Activated CD8-positive, alpha-beta T cell treated with anti-CD3 and anti-CD28 coated beads for 36 hours (primary cell): ENCODE measurements at regions of chr5 and their contacts with region 1.

Region 1: DNA sequence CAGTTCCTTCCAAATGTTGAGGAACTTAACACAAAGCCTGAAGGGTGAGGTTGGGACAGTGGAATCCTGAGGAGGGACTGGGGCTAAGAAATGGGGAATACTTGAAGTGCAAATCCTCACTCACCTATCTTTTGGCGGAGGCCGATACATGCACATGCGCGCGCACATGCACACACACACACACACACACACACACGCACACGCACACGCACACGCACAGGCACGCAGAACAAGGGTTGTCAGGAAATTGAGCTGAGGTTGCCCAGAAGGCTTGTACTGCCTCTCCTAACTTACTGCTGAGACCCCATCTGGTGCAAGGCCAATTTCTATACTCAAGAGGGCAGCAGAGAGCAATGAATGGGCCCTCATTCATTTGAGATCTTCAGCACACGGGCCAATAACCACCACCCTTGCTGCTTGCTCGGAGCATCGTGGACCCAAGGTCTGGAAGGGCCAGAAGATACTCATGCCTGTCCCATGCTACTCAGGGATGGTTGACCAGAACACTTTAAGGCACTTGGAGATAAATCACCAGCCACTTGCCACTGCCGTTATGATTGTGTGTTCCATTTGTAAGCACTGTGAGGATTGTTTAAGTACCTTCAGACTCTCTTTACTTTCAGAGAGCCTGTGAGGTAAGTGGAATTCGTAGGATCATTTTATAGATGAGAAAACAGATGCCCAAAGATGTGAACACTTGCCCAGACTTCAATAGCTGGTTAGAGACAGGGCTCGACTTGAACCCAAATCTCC is 21.5 kb downstream of the BTF3 start:
- DNase-seq: peak; percentile 78
- ATAC-seq: peak; percentile 100
- H3K4me3 Mint-ChIP-seq: peak overlapping the region; percentile 49
- H3K27ac Mint-ChIP-seq: no peak overlapping the region
- H3K4me1 Mint-ChIP-seq: peaks cover 9% of the 10 kb centered on the region
- H3K27me3 Mint-ChIP-seq: no peaks in the 10 kb centered on the region
- CTCF ChIP-seq: peak; percentile 47

Region 2: DNA sequence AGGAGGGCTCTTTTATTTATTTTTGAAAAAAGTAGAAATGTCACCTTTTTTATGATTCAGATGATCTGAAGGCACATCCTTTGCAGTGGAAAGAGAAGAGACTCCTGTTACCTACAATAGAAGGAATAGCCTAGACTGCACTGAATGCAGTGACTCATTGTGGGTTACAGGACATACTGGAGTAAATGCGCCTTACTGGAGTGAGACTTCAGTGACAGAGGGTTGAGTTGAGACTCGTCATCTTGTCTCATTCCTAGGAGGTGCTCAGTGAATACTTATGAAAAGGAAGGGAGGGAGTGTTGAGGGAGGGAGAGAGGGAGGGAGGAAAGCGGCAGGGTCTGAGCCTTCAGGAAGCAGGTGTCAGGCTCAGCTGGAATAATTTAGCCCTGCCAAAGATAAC is 20.5 kb after region 1 on chr5:
- CTCF ChIA-PET with region 1: interaction called, 108 read pairs
- POLR2A ChIA-PET with region 1: no interaction called
- intact Hi-C with region 1: loop called (anchors 1 kb)
- DNase-seq: no peak
- ATAC-seq: no peak
- H3K4me3 Mint-ChIP-seq: no peak overlapping the region
- H3K27ac Mint-ChIP-seq: no peak overlapping the region
- H3K4me1 Mint-ChIP-seq: peaks cover 2% of the 10 kb centered on the region
- H3K27me3 Mint-ChIP-seq: peaks cover 17% of the 10 kb centered on the region
- CTCF ChIP-seq: no peak

Region 3: GRCh38 chr5:73565139-73565968 is 45.6 kb after region 1 on chr5 and contains the starts of genes ANKRA2 and UTP15:
- CTCF ChIA-PET with region 1: interaction called, 23 read pairs
- POLR2A ChIA-PET with region 1: no interaction called
- intact Hi-C with region 1: no loop called
- DNase-seq: peak; percentile 100
- ATAC-seq: peak; percentile 94
- H3K4me3 Mint-ChIP-seq: peak within 1 kb of the TSS; percentile 99
- H3K27ac Mint-ChIP-seq: peak within 1 kb of the TSS; percentile 100
- H3K4me1 Mint-ChIP-seq: peaks cover 43% of the 10 kb centered on the region
- H3K27me3 Mint-ChIP-seq: no peaks in the 10 kb centered on the region
- CTCF ChIP-seq: no peak
- total RNA-seq, gene ANKRA2: 20.2 to 22.0 TPM
- total RNA-seq, gene UTP15: 30.6 to 34.6 TPM

Region 4: GRCh38 chr5:73625944-73626811 is 106.5 kb after region 1 on chr5 and contains the start of gene ARHGEF28:
- CTCF ChIA-PET with region 1: no interaction called
- POLR2A ChIA-PET with region 1: no interaction called
- intact Hi-C with region 1: no loop called
- DNase-seq: peak; percentile 17
- ATAC-seq: peak; percentile 74
- H3K4me3 Mint-ChIP-seq: peak within 1 kb of the TSS; percentile 52
- H3K27ac Mint-ChIP-seq: no peak within 1 kb of the TSS
- H3K4me1 Mint-ChIP-seq: peaks cover 2% of the 10 kb centered on the region
- H3K27me3 Mint-ChIP-seq: peaks cover 43% of the 10 kb centered on the region
- CTCF ChIP-seq: no peak
- total RNA-seq, gene ARHGEF28: 0.05 TPM in 1 of 2 experiments, not detected in the other